Cardiac septum (tissue), 1 donor: ENCODE measurements at regions of chr7 and their contacts with region 1.

Region 1: GRCh38 chr7:131546583-131547111 is 9.8 kb downstream of the PODXL start:
- DNase-seq: peak; percentile 70

Region 2: DNA sequence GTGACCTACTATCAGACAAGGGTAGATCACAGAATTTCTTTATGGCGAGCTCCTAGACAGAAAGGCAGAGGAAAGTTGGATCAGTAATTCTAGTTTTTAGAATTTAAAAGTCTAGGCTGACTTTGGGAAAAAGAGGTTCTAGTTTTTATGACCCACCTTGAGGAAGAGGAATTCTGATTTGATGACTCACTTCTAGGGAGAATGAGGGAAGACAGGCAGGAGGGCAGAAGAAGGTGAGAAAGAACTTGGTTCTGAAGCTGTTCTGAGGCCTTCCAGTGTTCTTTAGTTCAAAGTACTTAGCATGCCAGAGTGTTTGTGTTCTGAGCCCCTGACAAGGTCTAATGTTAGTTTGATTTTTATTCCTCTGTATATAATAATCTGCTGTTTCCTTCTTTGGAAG is 87.4 kb before region 1 on chr7:
- intact Hi-C with region 1: no loop called
- DNase-seq: no peak

Region 3: DNA sequence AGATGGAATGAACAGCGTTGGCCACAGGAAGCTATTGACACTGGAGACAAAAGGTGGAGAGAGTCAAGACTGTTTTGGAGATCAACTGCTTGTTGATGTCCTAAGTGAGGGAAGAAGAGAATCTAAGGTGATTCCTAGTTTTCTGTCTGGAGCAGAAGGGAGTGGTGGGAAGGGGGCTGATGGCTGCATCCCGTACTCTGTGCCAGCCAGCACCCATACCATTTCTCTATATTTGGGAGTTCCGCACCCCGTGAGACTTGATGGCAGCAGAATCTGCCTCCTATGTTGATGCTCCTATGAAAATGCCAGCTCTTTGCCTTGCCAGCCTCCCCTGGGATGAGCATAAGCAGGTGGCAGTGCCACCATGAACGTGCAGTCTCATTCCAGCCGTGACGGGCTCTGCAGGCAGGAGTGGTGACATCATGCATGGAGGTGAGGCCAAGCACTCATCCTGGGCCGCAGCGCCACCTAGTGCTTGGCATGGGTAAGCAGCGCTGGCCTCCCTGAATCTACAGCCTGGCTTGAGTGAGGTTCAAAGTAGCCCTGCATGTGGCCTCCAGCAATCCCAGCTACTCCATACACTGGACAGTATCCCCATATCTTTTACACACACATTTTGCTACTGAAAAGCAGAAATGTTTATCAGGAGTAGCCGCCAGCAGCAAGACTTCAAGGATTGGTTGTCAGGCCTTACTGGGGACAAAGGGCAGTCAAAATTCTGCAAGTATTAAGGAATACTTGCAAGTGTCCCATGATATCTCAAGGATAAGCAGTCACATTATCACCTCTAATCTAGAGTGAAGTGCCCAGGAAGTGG is 33.2 kb before region 1 on chr7:
- intact Hi-C with region 1: loop called (anchors 2 kb)
- DNase-seq: peak; percentile 94

Region 4: DNA sequence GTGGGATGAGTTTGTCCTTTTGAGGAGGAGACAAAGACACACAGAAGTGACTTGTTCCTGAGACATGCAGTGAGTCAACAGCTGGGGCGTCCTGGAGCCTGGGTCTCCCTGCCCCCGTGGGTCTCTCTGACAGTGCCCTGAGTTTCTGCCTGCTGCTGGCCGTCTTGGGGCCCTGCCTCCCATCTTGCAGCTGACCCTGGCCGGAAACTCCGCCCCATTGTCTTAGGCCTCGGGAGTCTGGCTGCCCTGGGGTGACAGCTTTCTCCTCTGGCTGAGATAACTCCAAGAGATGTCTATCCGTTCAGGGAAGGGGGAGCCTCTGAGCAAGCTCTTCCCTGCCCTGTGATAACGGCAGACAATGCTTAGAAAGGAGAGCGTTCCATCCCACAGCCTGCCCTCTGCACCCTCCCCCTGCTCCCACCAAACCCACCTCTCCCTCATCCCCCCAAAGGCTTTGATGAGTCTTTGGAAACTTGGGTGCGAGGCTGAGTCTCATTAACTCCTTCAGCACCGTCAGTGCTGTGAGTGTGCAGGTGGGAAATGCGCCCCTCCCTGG is 79.2 kb after region 1 on chr7:
- intact Hi-C with region 1: loop called (anchors 5 kb)
- DNase-seq: peak; percentile 80

Region 5: GRCh38 chr7:131654668-131655326 is 108.2 kb after region 1 on chr7:
- intact Hi-C with region 1: loop called (anchors 2 kb)
- DNase-seq: peak; percentile 91